ENCODE measurements at regions of chr10 and their contacts with region 1.

Region 1: DNA sequence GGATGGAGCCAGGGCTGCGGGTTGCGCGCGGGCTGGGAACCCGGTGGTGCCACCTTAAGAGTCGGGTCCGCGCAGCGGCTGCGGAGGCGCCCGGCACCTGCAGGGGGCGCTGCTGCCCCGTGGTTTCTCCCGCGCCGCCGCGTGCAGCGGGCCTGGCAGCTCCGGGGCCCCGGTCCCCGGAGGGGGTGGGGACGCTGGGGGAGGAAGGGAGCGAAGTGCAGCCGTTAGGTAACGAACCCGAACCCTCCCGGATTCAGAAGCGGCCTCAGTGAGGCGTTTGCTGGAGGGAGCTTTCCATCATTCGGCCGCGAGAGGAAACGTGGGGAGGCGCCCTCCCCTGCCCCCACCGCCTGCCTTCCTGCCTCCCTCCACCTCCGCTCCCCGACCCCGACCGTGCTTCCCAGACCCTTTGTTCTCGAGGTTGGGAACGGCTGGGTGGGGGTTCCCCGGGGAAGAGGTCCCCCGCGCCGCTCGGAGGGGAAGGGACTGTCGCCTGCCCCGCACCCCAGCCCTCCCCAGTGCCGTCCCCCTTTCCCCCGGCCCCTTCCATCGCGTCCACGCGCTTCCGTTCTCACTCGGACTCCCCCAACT is 29.6 kb downstream of the SKIDA1 start:
- DNase-seq: peak; percentile 74 to 97 (median 89)
- ATAC-seq: peak; percentile 94
- H3K4me3 ChIP-seq: peak overlapping the region; percentile 79
- H3K4me3 Mint-ChIP-seq: peak overlapping the region; percentile 86 to 95 (median 90)
- H3K27ac ChIP-seq: no peak overlapping the region
- H3K27ac Mint-ChIP-seq: peak overlapping the region in 6 of 9 donors; percentile 47 to 76 (median 55)
- H3K4me1 ChIP-seq: peaks cover 20% of the 10 kb centered on the region in 2 donors
- H3K4me1 Mint-ChIP-seq: peaks cover 19 to 38% (median 25%) of the 10 kb centered on the region in 7 donors
- H3K27me3 ChIP-seq: peaks cover 0 to 32% of the 10 kb centered on the region in 2 donors
- H3K27me3 Mint-ChIP-seq: peaks cover 47 to 81% (median 52%) of the 10 kb centered on the region in 5 donors

Region 2: GRCh38 chr10:21078410-21079329 is 417.2 kb before region 1 on chr10:
- CTCF ChIA-PET with region 1: no interaction called
- POLR2A ChIA-PET with region 1: no interaction called
- intact Hi-C with region 1: no loop called
- DNase-seq: no peak
- ATAC-seq: no peak
- H3K4me3 ChIP-seq: no peak overlapping the region
- H3K4me3 Mint-ChIP-seq: no peak overlapping the region
- H3K27ac ChIP-seq: no peak overlapping the region
- H3K27ac Mint-ChIP-seq: peak overlapping the region in 1 of 9 donors; percentile 87
- H3K4me1 ChIP-seq: no peaks in the 10 kb centered on the region
- H3K4me1 Mint-ChIP-seq: no peaks in the 10 kb centered on the region
- H3K27me3 ChIP-seq: no peaks in the 10 kb centered on the region
- H3K27me3 Mint-ChIP-seq: peaks cover 0 to 10% (median 3%) of the 10 kb centered on the region in 5 donors

Region 3: DNA sequence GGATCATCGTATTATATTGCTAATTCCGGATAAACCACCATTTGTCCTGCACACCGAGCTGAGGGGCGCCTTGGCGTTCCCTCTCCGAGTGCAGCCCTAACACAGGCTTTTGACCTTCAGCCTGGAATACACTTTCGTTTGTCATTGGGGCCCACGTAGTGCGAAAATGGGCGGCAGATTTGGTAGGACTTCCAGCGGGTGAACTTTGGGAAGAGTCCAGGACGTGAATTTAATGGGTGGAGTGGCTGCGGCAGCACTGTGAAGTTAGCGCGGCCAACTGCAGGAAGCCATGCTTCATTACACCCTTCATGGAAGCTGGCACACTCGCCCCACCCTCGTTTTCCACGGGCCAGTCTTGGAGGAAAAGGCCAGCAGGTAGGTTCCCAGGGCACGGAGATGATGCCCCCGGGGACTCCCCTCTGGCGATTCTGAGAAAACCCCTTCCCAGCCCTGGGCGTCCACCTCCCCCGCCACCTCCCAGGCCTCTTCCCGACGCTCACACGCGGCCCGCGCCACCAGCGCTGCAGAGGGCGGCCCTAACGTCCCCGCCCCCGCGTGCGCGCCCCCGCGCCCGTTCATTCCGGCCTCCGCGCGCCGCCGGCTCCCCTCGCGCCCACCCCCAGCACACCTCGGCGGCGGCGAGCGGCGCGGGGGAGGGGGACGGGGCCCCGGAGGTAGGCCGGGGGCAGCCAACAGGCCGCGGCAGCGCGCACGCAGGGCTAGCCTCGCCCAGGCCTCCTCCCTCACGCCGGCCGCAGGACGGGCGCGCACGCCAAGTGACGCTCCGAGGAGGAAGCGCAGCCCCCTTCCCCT is 37.8 kb after region 1 on chr10 and contains the start of gene MLLT10:
- CTCF ChIA-PET with region 1: interaction called, 4 read pairs
- POLR2A ChIA-PET with region 1: interaction called, 4 read pairs
- intact Hi-C with region 1: loop called (anchors 1 kb)
- DNase-seq: peak; percentile 90 to 96 (median 94)
- ATAC-seq: peak; percentile 95
- H3K4me3 ChIP-seq: peak within 1 kb of the TSS; percentile 81
- H3K4me3 Mint-ChIP-seq: peak within 1 kb of the TSS; percentile 90 to 98 (median 97)
- H3K27ac ChIP-seq: peak within 1 kb of the TSS; percentile 83
- H3K27ac Mint-ChIP-seq: peak within 1 kb of the TSS; percentile 91 to 98 (median 97)
- H3K4me1 ChIP-seq: peaks cover 8 to 15% of the 10 kb centered on the region in 2 donors
- H3K4me1 Mint-ChIP-seq: peaks cover 14 to 36% (median 27%) of the 10 kb centered on the region in 7 donors
- H3K27me3 ChIP-seq: no peaks in the 10 kb centered on the region
- H3K27me3 Mint-ChIP-seq: peaks cover 0 to 18% (median 0%) of the 10 kb centered on the region in 5 donors
- total RNA-seq, gene MLLT10: 50.0 to 74.2 (median 67.9) TPM

Region 4: GRCh38 chr10:21732067-21732772 is 236.4 kb after region 1 on chr10:
- CTCF ChIA-PET with region 1: interaction called, 4 read pairs
- POLR2A ChIA-PET with region 1: no interaction called
- intact Hi-C with region 1: loop called (anchors 1 kb)
- DNase-seq: peak in 6 of 9 donors; percentile 27 to 48 (median 34)
- ATAC-seq: peak; percentile 76
- H3K4me3 ChIP-seq: no peak overlapping the region
- H3K4me3 Mint-ChIP-seq: no peak overlapping the region
- H3K27ac ChIP-seq: no peak overlapping the region
- H3K27ac Mint-ChIP-seq: peak overlapping the region in 4 of 9 donors; percentile 3 to 77 (median 60)
- H3K4me1 ChIP-seq: peaks cover 0 to 19% of the 10 kb centered on the region in 2 donors
- H3K4me1 Mint-ChIP-seq: peaks cover 19 to 42% (median 35%) of the 10 kb centered on the region in 7 donors
- H3K27me3 ChIP-seq: no peaks in the 10 kb centered on the region
- H3K27me3 Mint-ChIP-seq: no peaks in the 10 kb centered on the region

Region 5: DNA sequence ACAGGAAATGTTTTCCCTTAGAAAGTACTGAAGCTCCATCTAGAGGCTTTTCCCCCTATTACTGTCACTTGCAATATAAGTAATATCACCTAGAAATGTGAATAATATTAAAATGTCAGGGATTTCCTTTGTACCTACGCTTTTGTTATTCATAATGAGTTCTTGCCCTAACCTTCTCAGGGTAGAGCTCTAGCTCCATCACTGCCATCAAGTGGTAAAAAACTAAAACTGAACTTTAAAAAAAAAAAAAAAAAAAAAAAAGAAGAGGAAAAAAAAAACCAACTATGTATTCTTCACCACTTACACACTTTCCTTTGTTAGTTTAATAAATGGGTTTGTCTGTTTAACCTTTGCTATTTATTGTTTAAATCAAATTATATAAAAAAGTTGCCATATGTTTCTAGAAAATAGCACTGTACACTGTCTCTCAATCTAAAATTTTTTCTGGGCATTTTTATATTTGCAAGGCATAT is 457.8 kb after region 1 on chr10:
- CTCF ChIA-PET with region 1: interaction called, 15 read pairs
- POLR2A ChIA-PET with region 1: interaction called, 7 read pairs
- intact Hi-C with region 1: loop called (anchors 1 kb)
- DNase-seq: peak in 6 of 9 donors; percentile 10 to 48 (median 26)
- ATAC-seq: peak; percentile 68
- H3K4me3 ChIP-seq: no peak overlapping the region
- H3K4me3 Mint-ChIP-seq: no peak overlapping the region
- H3K27ac ChIP-seq: no peak overlapping the region
- H3K27ac Mint-ChIP-seq: no peak overlapping the region
- H3K4me1 ChIP-seq: no peaks in the 10 kb centered on the region
- H3K4me1 Mint-ChIP-seq: peaks cover 0 to 4% (median 0%) of the 10 kb centered on the region in 7 donors
- H3K27me3 ChIP-seq: no peaks in the 10 kb centered on the region
- H3K27me3 Mint-ChIP-seq: no peaks in the 10 kb centered on the region

Region 6: DNA sequence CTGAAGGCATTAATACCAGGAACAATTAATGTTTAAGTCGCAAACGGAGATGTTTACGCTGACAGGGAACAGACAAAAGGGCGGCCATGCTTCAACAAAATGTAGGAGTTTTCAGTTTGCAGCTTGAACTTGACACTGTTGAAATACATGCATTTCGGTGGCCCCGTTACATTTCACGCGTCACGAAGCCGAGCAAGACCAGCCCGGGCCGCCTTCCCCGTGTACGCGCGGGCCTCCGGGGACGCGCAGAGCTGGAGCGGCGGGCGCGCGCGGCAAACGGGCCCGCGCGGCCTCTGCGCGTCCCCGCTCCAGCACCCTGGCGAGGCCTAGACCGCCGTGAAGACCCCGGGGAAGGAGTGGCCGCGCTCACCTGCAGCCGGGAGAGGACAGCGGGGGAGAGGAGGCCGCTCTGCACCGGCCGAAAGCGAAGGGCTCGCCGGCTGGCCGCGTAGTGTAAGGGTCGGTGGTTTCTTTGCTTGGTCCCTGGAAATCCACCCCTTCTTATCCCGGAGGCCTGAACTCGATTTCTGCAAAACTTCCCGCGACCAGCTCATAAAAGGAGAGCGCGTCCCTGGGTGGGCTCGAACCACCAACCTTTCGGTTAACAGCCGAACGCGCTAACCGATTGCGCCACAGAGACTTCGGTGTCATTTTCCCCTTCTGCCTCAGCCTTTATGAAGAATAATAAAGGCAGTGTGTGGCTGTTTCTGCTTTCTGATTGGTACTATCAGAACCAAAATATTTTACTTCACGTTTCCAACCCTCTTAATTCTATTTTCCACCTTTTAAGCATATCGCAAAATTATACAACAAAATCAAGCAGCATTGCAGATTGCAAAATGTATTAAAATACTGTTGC is 733.3 kb after region 1 on chr10:
- CTCF ChIA-PET with region 1: interaction called, 3 read pairs
- POLR2A ChIA-PET with region 1: no interaction called
- intact Hi-C with region 1: loop called (anchors 2 to 10 kb)
- DNase-seq: peak; percentile 74 to 94 (median 92)
- ATAC-seq: peak; percentile 95
- H3K4me3 ChIP-seq: peak overlapping the region; percentile 85
- H3K4me3 Mint-ChIP-seq: peak overlapping the region; percentile 84 to 99 (median 94)
- H3K27ac ChIP-seq: peak overlapping the region; percentile 70
- H3K27ac Mint-ChIP-seq: peak overlapping the region; percentile 96 to 100 (median 99)
- H3K4me1 ChIP-seq: peaks cover 6 to 8% of the 10 kb centered on the region in 2 donors
- H3K4me1 Mint-ChIP-seq: peaks cover 11 to 27% (median 15%) of the 10 kb centered on the region in 7 donors
- H3K27me3 ChIP-seq: no peaks in the 10 kb centered on the region
- H3K27me3 Mint-ChIP-seq: peaks cover 0 to 20% (median 5%) of the 10 kb centered on the region in 5 donors

Region 7: DNA sequence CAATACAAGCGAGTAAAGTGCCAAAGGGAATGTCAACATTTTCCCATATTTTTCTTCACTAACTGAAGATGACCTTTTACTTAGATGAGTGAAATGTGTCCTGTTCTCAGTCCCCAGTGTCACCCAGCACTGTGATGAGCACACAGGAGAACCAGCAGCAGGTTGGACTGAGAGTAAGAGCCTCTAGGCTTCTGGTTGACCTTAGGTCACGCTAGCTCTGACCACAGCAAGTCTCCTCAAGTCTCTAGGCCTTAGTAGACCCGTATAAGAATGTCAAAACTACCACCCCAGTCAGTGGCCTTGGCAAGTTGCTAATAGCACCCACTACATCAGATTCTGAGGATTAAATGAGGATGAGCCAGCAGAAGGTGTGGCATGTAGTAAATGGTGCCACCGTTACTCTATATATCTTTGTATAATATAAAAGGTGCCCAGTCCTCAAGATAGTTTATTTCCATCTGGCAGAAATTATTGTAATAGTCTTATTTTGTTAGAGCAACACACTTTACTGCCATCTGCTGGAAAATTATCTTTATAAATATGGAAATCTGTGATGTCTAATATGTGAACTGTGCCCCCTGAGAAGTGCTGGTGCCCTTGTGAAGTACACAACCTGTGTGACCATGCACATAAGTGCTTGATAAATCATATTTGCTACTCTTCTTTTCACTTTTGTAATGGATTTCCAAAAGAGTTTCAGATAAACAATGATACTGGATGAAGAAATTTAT is 925.1 kb after region 1 on chr10:
- CTCF ChIA-PET with region 1: no interaction called
- POLR2A ChIA-PET with region 1: no interaction called
- intact Hi-C with region 1: loop called in 1 of 2 experiments (anchors 5 kb)
- DNase-seq: peak in 4 of 9 donors; percentile 15 to 41 (median 40)
- ATAC-seq: peak; percentile 54
- H3K4me3 ChIP-seq: no peak overlapping the region
- H3K4me3 Mint-ChIP-seq: no peak overlapping the region
- H3K27ac ChIP-seq: no peak overlapping the region
- H3K27ac Mint-ChIP-seq: no peak overlapping the region
- H3K4me1 ChIP-seq: no peaks in the 10 kb centered on the region
- H3K4me1 Mint-ChIP-seq: peaks cover 0 to 3% (median 0%) of the 10 kb centered on the region in 7 donors
- H3K27me3 ChIP-seq: no peaks in the 10 kb centered on the region
- H3K27me3 Mint-ChIP-seq: peaks cover 0 to 4% (median 0%) of the 10 kb centered on the region in 5 donors

Region 8: DNA sequence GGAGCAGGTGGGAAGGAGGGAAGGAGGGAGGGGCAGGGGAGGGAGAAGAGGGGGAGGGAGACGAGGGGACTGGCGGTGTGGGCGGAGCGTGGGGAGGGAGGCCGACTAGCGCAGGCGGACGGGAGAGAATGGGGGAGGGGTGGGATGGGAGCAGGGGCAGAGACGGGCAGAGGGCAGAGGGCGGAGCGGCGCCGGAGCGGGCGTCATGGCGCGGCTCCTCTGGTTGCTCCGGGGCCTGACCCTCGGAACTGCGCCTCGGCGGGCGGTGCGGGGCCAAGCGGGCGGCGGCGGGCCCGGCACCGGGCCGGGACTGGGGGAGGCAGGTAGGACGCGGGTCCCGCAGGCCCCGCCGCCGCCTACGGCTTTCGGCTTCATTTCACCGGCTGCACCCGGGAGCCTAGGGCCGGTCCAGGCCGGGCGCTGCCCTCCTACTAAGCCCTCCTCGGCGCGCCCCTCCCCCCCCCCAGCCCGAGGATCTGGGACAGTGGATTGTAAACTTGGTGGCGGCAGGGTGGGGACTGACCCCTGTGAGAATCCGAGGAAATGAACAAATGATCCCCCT is 1599.6 kb after region 1 on chr10 and contains the start of gene MSRB2:
- CTCF ChIA-PET with region 1: no interaction called
- POLR2A ChIA-PET with region 1: no interaction called
- intact Hi-C with region 1: loop called in 1 of 2 experiments (anchors 1 kb)
- DNase-seq: peak; percentile 34 to 70 (median 58)
- ATAC-seq: peak; percentile 83
- H3K4me3 ChIP-seq: peak within 1 kb of the TSS; percentile 66
- H3K4me3 Mint-ChIP-seq: peak within 1 kb of the TSS; percentile 85 to 100 (median 94)
- H3K27ac ChIP-seq: peak within 1 kb of the TSS; percentile 74
- H3K27ac Mint-ChIP-seq: peak within 1 kb of the TSS; percentile 84 to 97 (median 94)
- H3K4me1 ChIP-seq: peaks cover 13 to 20% of the 10 kb centered on the region in 2 donors
- H3K4me1 Mint-ChIP-seq: peaks cover 30 to 45% (median 43%) of the 10 kb centered on the region in 7 donors
- H3K27me3 ChIP-seq: no peaks in the 10 kb centered on the region
- H3K27me3 Mint-ChIP-seq: peaks cover 0 to 22% (median 0%) of the 10 kb centered on the region in 5 donors
- total RNA-seq, gene MSRB2: 4.7 to 11.9 (median 9.0) TPM

Measured in naive thymus-derived CD4-positive, alpha-beta T cell (primary cell).